PC-3 (cell line): ENCODE measurements at regions of chr15 and their contacts with region 1.

Region 1: DNA sequence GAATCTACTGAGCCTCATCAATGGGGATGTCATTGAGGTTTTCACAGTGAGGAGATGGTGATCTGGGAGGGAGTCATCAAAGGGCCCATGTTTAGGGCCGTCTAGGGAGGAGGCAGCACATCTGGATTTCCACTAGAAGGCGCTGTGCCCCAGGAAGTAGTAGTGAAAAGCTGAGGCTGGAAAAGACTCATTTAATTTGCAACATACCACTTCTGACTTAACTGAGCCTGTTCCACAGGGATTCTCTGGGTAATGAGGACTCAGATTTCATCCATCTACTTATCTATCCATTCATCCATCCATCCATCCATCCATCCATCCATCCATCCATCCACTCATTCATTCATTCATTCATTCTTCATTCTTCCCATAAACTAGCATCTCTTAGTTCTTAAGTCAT is 17.4 kb upstream of the SHF start:
- DNase-seq: peak; percentile 86
- ATAC-seq: peak; percentile 35
- H3K4me3 ChIP-seq: no peak overlapping the region
- H3K27ac ChIP-seq: no peak overlapping the region
- H3K4me1 ChIP-seq: no peaks in the 10 kb centered on the region
- H3K27me3 ChIP-seq: no peaks in the 10 kb centered on the region
- CTCF ChIP-seq: peak; percentile 94

Region 2: DNA sequence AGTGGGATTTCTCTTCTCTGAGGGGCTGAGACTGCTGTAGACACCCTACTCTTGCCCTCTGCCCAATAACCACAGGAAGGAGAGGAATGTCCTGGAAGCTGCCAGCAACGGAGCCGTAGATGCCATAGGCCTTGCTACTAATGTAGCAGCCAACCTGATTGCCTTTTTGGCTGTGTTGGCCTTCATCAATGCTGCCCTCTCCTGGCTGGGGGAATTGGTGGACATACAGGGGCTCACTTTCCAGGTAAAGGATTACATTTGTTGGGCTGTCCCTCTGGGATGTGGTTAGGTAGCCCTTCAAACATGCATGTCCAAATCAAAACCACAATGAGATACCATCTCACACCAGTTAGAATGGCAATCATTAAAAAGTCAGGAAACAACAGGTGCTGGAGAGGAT is 62.9 kb after region 1 on chr15:
- CTCF ChIA-PET with region 1: no interaction called
- POLR2A ChIA-PET with region 1: no interaction called
- intact Hi-C with region 1: loop called (anchors 1 kb)
- DNase-seq: peak; percentile 53
- ATAC-seq: no peak; the same call in 1 of the 2 replicates
- H3K4me3 ChIP-seq: no peak overlapping the region
- H3K27ac ChIP-seq: no peak overlapping the region
- H3K4me1 ChIP-seq: no peaks in the 10 kb centered on the region
- H3K27me3 ChIP-seq: no peaks in the 10 kb centered on the region
- CTCF ChIP-seq: peak; percentile 61